ENCODE measurements at regions of chr11 and their contacts with region 1.

Region 1: DNA sequence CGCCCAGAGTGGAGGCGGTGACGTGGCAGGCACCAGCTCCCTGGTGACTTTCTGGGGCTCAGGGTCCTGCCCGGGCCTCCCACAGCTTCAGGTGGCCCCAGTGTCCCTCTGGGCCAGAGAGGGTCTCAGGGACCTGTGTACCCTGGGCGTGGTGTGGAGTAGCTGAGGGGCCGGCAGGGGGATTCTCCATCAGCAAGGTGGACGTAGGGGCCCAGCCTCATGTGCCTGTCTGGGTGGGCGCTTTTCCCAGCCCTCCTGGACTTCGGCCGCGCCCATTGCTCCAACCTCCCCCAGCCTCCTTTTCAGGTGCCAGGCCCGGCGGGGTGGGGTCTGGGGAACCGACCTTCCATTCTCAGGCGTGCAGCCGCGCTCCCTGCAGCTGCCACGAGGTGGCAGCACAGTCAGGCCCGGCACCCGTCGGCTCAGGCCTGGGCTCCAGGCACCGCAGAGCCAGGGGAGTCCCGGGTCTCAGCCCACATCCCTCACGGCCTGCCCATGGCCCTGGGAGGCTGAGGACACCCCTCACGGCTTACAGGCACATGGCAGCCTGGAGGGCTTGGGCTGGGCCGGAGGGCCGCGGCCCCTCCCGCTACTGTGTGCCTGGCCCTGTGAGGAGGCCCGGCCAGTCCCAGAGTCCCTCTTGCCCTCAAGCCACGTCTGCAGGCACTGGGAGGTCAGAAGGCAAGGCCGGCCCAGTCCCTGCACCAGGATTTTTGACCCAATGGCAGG is 19.9 kb upstream of the MUC5B start:
- DNase-seq: peak; percentile 82
- ATAC-seq: peak; percentile 87

Region 2: DNA sequence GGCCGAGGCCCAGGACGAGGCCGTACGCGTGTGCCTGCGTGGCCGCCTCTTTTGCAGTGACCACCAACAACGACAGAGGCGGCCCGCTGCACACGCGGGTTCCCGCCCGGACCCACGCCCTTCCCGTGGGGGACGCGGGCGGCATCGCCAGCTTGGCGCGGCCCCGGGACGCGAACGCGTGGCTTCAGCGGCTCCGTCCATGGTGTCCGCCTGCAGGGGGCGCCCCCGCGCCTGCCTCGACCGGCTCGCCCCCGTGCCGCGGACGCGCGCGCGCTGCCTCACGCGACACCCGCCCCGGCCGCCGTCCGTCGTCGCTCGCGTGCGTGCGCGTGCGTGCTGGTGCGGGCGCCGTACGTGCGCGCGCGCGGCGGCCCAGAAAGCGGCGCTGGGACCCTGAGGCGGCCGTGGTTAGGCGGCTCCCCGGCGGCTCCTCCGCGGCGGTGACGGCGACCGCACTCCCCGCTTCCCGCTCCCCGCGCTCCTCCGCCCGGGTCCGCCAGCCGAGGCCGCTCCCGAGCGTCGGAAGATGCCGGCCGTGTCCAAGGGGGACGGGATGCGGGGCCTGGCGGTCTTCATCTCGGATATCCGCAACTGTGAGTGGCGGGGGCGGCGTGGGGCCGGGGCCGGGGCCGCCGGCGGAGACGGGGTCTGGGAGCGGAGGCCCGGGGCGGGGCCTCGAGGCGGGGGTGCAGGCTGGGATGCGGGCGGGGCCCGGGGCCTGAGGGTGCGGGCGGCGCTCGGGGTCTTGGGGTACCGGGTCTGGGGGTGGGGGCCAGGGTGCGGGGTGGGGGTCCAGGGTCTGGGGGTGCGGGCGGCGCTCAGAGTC is 277.2 kb before region 1 on chr11 and contains the start of gene AP2A2:
- intact Hi-C with region 1: no loop called
- DNase-seq: peak; percentile 93
- ATAC-seq: peak; percentile 83
- total RNA-seq, gene AP2A2: 119 TPM

Region 3: GRCh38 chr11:1515082-1516060 is 312.4 kb after region 1 on chr11:
- intact Hi-C with region 1: loop called (anchors 2 kb)
- DNase-seq: peak; percentile 92
- ATAC-seq: peak; percentile 94

Region 4: GRCh38 chr11:1586699-1587098 is 383.8 kb after region 1 on chr11:
- intact Hi-C with region 1: loop called (anchors 10 kb)
- DNase-seq: no peak
- ATAC-seq: no peak